ENCODE measurements at regions of chr17 and their contacts with region 1.

Region 1: DNA sequence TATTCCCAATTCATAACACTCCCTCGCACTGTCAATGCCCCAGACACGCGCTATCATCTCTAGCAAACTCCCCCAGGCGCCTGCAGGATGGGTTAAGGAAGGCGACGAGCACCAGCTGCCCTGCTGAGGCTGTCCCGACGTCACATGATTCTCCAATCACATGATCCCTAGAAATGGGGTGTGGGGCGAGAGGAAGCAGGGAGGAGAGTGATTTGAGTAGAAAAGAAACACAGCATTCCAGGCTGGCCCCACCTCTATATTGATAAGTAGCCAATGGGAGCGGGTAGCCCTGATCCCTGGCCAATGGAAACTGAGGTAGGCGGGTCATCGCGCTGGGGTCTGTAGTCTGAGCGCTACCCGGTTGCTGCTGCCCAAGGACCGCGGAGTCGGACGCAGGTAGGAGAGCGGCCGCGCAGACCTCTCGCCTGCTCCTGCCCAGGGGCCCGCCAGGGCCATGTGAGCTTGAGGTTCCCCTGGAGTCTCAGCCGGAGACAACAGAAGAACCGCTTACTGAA is at the start of gene GRN:
- DNase-seq: peak; percentile 92
- ATAC-seq: peak; percentile 84
- H3K4me3 ChIP-seq: peak within 1 kb of the TSS; percentile 87
- H3K27ac ChIP-seq: peak within 1 kb of the TSS; percentile 92
- H3K4me1 ChIP-seq: peaks cover 37% of the 10 kb centered on the region
- H3K27me3 ChIP-seq: no peaks in the 10 kb centered on the region
- CTCF ChIP-seq: no peak
- EP300 ChIP-seq: no peak
- POLR2A ChIP-seq: peak; percentile 92
- RAD21 ChIP-seq: no peak
- polyA plus RNA-seq, gene GRN: 22.3 to 33.2 TPM

Region 2: DNA sequence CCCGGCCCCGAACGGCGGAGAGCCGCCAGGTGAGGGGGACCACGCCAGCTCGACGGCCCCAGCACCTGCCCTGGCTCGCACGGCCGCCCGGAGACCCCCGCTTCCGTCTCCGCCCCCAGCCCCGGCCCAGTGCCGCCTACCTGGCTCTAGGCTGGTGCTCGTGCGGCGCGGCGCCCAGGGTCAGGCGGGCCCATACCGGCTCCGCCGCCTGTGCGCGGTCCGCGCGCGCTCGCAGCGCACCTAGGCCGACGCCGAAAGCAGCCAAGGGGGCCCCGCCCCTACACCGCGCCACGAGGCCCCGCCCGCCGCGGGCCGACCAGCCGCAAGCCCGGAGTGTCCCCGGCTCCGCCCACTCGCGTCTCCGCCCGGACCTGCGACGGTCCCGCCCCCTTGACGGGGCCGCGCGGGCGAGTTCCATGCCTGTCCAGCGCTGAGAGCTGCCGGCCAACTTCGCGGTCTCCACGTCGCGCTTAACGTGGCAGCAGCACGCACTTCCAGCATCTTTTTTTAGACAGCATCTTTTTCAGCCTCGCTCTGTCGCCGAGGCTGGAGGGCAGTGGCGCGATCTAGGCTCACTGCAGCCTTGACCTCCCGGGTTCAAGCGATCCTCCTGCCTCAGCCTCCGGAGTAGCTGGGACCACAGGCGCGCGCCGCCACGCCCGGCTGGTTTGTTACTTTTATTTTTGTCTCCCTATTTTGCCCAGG is 20.3 kb before region 1 on chr17 and contains the start of gene SLC25A39:
- CTCF ChIA-PET with region 1: interaction called, 154 read pairs
- POLR2A ChIA-PET with region 1: interaction called, 8 read pairs
- RAD21 ChIA-PET with region 1: interaction called, 18 read pairs
- SMC1A ChIA-PET with region 1: interaction called, 29 read pairs
- in situ Hi-C with region 1: no loop called
- intact Hi-C with region 1: no loop called
- DNase-seq: no peak
- ATAC-seq: peak; percentile 80
- H3K4me3 ChIP-seq: peak within 1 kb of the TSS; percentile 97
- H3K27ac ChIP-seq: peak within 1 kb of the TSS; percentile 96
- H3K4me1 ChIP-seq: peaks cover 8% of the 10 kb centered on the region
- H3K27me3 ChIP-seq: no peaks in the 10 kb centered on the region
- CTCF ChIP-seq: no peak
- EP300 ChIP-seq: no peak
- POLR2A ChIP-seq: peak; percentile 88
- RAD21 ChIP-seq: no peak
- polyA plus RNA-seq, gene SLC25A39: 3.5 to 7.5 TPM

Region 3: GRCh38 chr17:44331249-44331760 is 13.7 kb before region 1 on chr17:
- CTCF ChIA-PET with region 1: interaction called, 154 read pairs
- POLR2A ChIA-PET with region 1: interaction called, 8 read pairs
- RAD21 ChIA-PET with region 1: interaction called, 18 read pairs
- SMC1A ChIA-PET with region 1: interaction called, 29 read pairs
- in situ Hi-C with region 1: no loop called
- intact Hi-C with region 1: no loop called
- DNase-seq: no peak
- ATAC-seq: peak; percentile 72
- H3K4me3 ChIP-seq: no peak overlapping the region
- H3K27ac ChIP-seq: no peak overlapping the region
- H3K4me1 ChIP-seq: peaks cover 14% of the 10 kb centered on the region
- H3K27me3 ChIP-seq: no peaks in the 10 kb centered on the region
- CTCF ChIP-seq: peak; percentile 69 to 85 (median 84)
- EP300 ChIP-seq: no peak
- POLR2A ChIP-seq: no peak
- RAD21 ChIP-seq: peak; percentile 83